ENCODE measurements at regions of chr5 and their contacts with region 1.

Region 1: DNA sequence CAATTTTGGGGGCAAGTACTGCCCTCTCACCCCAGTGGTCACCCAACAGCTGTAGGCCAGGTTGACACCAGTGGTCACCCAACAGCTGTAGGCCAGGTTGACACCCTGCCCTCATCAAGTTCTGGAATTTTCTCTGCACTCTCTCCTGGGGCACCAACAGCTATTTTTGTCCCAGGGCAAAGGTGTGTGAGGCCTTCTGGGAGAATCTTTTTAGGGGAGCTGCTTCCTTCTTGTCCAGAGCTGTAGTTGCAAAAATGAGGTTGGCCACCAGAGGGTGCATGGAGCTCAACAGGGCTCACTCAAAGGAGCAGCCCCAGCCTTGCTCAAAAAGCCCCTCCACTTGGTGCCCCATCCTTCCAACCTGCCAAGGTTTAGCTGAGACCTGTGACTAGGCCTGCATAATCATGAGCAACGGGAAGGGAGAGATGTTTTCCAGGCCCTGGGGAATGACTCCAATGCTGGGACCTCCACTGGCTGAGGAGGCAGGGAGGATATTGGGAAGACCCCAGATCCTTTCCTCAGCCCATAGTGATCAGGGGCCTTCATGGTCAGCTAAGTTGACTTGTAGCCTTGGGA is 10.6 kb upstream of the P4HA2 start:
- DNase-seq: peak; percentile 83
- H3K4me3 Mint-ChIP-seq: no peak overlapping the region
- H3K27ac Mint-ChIP-seq: no peak overlapping the region
- H3K4me1 Mint-ChIP-seq: no peaks in the 10 kb centered on the region
- H3K27me3 Mint-ChIP-seq: peaks cover 3% of the 10 kb centered on the region

Region 2: GRCh38 chr5:132211787-132212186 is 26.5 kb before region 1 on chr5:
- CTCF ChIA-PET with region 1: interaction called, 11 read pairs
- POLR2A ChIA-PET with region 1: no interaction called
- intact Hi-C with region 1: no loop called
- DNase-seq: no peak
- H3K4me3 Mint-ChIP-seq: no peak overlapping the region
- H3K27ac Mint-ChIP-seq: no peak overlapping the region
- H3K4me1 Mint-ChIP-seq: no peaks in the 10 kb centered on the region
- H3K27me3 Mint-ChIP-seq: no peaks in the 10 kb centered on the region

Region 3: DNA sequence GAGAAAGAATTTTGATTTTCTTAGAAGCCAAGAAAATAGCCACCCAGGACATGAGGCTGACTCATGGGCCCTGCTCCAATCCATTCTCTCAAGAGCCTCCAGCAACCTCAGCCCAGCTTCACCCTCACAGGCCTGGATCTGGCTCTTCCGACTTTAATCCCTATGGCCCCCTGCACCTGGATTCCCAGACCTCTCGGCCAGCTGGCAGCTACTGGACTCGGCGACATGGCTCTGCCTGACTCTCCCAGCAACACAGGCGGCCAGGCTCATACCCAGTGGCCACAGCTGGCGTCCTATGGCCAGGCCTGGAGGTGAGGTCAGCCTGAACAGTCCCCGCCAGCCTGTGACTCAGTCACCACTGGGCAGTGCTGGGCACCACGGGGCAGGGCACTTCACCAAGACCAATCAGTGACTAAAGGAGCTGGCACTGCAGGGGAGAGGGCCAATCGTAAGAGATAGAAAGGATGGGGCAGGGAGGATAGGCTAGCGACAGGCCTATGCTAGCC is 13.0 kb after region 1 on chr5:
- CTCF ChIA-PET with region 1: interaction called, 17 read pairs
- POLR2A ChIA-PET with region 1: no interaction called
- intact Hi-C with region 1: no loop called
- DNase-seq: no peak
- H3K4me3 Mint-ChIP-seq: no peak overlapping the region
- H3K27ac Mint-ChIP-seq: no peak overlapping the region
- H3K4me1 Mint-ChIP-seq: no peaks in the 10 kb centered on the region
- H3K27me3 Mint-ChIP-seq: peaks cover 2% of the 10 kb centered on the region

Region 4: DNA sequence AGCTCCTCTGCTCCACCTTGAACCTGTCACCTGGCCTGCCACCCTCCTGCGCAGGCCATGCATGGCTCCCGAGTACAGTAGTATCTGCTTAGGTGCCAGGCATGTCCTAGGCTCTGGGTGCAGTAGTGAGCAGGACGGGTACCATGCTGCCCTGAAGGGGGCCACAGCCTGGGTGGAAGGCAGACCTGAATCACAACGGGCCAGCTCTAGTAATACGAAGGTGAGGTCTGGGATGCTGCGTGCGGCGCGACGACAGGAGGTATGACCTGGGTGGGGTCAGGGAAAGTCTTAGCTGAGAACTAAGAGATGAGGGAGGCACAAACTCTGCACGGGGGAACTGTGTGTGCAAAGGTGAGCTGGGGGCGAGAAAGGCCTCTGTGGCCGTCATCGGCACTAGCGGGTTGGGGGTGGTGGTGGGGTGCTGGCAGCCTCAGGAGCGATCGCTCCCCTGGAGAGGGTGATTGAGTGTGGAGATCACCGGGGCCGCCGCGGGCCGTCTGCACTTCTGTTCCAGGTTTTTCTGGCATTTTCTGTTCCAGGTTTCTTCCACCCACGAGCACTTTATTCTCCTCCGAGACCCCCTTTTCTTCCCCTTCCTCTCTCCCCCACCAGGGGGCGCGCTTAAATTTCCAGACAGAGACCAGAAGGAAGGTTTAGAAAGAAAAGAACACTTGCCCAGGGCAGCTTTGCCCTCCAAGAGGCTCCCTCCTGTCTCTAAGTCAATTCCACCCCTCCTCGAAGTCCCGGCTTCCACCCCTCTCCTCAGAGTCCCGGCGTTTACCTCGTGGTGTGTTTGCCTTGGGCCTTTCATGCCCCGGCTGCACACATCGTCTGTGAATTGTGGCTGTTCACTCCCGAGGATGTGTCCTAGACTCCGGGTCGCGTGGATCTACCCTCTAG is 34.3 kb after region 1 on chr5:
- CTCF ChIA-PET with region 1: interaction called, 13 read pairs
- POLR2A ChIA-PET with region 1: no interaction called
- intact Hi-C with region 1: loop called (anchors 5 kb)
- DNase-seq: peak; percentile 81
- H3K4me3 Mint-ChIP-seq: no peak overlapping the region
- H3K27ac Mint-ChIP-seq: no peak overlapping the region
- H3K4me1 Mint-ChIP-seq: peaks cover 8% of the 10 kb centered on the region
- H3K27me3 Mint-ChIP-seq: peaks cover 12% of the 10 kb centered on the region

Region 5: GRCh38 chr5:132369474-132370180 is 131.4 kb after region 1 on chr5 and contains the start of gene SLC22A5:
- CTCF ChIA-PET with region 1: interaction called, 16 read pairs
- POLR2A ChIA-PET with region 1: no interaction called
- intact Hi-C with region 1: no loop called
- DNase-seq: peak; percentile 79
- H3K4me3 Mint-ChIP-seq: peak within 1 kb of the TSS; percentile 76
- H3K27ac Mint-ChIP-seq: peak within 1 kb of the TSS; percentile 42
- H3K4me1 Mint-ChIP-seq: peaks cover 24% of the 10 kb centered on the region
- H3K27me3 Mint-ChIP-seq: no peaks in the 10 kb centered on the region
- total RNA-seq, gene SLC22A5: 2.8 to 3.6 TPM

Measured in activated CD4-positive, alpha-beta memory T cell treated with anti-CD3 and anti-CD28 coated beads for 36 hours (primary cell).